Activated CD8-positive, alpha-beta T cell treated with anti-CD3 and anti-CD28 coated beads for 36 hours (primary cell): ENCODE measurements at regions of chr1 and their contacts with region 1.

Region 1: GRCh38 chr1:65209005-65209885 is 61.2 kb downstream of the AK4 start:
- DNase-seq: peak; percentile 22
- ATAC-seq: no peak
- H3K4me3 Mint-ChIP-seq: no peak overlapping the region
- H3K27ac Mint-ChIP-seq: no peak overlapping the region
- H3K4me1 Mint-ChIP-seq: peaks cover 28% of the 10 kb centered on the region
- H3K27me3 Mint-ChIP-seq: peaks cover 4% of the 10 kb centered on the region
- CTCF ChIP-seq: peak; percentile 61

Region 2: DNA sequence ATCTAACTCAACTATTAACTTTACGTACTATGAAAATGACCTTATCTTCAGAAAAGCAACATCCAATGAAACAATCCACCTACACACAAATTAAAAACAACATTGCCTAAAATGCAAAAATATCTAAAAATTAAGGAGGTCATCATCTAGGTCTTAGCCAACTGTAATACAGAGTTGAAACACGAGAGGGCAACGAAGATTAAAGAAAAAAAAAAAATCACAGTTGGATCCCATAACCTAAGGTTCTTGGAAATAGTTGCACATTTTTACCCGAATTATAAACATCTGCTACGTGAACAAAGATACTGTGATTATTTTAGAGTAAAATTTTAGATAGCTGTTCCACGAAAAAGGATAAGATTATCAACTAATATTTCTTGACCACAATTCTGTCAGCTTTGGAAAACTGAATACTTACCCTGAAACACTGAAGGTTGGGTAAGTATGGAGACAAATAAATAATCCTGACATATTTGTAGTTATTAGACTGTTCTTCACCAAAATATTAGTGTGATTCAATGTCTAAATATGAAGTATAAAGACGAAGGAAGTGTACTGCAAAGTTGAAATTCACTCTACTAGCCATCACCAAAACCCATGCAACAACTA is 149.2 kb before region 1 on chr1:
- CTCF ChIA-PET with region 1: interaction called, 14 read pairs
- POLR2A ChIA-PET with region 1: no interaction called
- intact Hi-C with region 1: loop called (anchors 5 kb)
- DNase-seq: no peak
- ATAC-seq: peak; percentile 66
- H3K4me3 Mint-ChIP-seq: no peak overlapping the region
- H3K27ac Mint-ChIP-seq: no peak overlapping the region
- H3K4me1 Mint-ChIP-seq: peaks cover 44% of the 10 kb centered on the region
- H3K27me3 Mint-ChIP-seq: no peaks in the 10 kb centered on the region
- CTCF ChIP-seq: peak; percentile 70

Region 3: GRCh38 chr1:65148548-65149350 is 60.5 kb before region 1 on chr1:
- CTCF ChIA-PET with region 1: no interaction called
- POLR2A ChIA-PET with region 1: no interaction called
- intact Hi-C with region 1: loop called (anchors 5 kb)
- DNase-seq: peak; percentile 87
- ATAC-seq: peak; percentile 76
- H3K4me3 Mint-ChIP-seq: peak overlapping the region; percentile 90
- H3K27ac Mint-ChIP-seq: peak overlapping the region; percentile 86
- H3K4me1 Mint-ChIP-seq: peaks cover 21% of the 10 kb centered on the region
- H3K27me3 Mint-ChIP-seq: peaks cover 35% of the 10 kb centered on the region
- CTCF ChIP-seq: no peak

Region 4: DNA sequence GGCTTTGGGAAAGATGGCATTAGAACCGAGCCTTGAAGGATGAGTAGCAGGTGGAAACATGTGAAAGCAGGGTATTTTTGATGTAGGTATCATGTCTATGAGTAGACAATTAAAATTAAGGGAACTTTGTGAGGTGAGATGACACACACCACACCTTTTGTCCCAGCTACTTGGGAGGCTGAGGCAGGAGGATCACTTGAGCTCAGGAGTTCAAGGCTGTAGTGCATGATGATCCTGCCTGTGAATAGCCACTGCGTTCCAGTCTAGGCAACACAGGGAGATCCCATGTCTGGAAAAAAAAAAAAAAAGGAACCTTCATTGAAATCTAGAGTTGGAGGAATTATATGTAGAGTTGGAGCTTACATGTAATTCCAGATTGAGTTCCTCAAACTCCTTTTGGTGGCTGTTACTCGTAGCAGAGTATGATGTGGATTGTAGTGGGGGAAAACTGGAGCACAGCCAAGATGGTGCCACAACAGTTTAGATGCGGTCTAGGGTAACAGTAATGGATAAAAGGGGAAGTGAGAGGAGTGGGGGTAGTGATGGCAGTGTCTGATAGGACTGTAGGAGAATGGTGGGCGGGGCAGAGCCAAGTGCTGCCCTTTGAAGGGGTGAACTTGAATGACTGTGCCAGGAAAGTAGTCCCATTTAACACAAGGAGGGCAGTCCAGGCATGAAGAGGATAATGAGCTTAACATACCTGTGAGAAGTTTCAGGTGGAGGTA is 43.8 kb before region 1 on chr1:
- CTCF ChIA-PET with region 1: no interaction called
- POLR2A ChIA-PET with region 1: no interaction called
- intact Hi-C with region 1: no loop called
- DNase-seq: peak; percentile 4
- ATAC-seq: no peak
- H3K4me3 Mint-ChIP-seq: no peak overlapping the region
- H3K27ac Mint-ChIP-seq: no peak overlapping the region
- H3K4me1 Mint-ChIP-seq: peaks cover 8% of the 10 kb centered on the region
- H3K27me3 Mint-ChIP-seq: peaks cover 10% of the 10 kb centered on the region
- CTCF ChIP-seq: no peak